GM18951 (cell line): ENCODE measurements at regions of chr4 and their contacts with region 1.

Region 1: GRCh38 chr4:24980064-24980690 is 50.6 kb downstream of the LGI2 start:
- POLR2A ChIP-seq: no peak

Region 2: GRCh38 chr4:24809376-24809775 is 170.8 kb before region 1 on chr4:
- in situ Hi-C with region 1: no loop called
- POLR2A ChIP-seq: no peak

Region 3: DNA sequence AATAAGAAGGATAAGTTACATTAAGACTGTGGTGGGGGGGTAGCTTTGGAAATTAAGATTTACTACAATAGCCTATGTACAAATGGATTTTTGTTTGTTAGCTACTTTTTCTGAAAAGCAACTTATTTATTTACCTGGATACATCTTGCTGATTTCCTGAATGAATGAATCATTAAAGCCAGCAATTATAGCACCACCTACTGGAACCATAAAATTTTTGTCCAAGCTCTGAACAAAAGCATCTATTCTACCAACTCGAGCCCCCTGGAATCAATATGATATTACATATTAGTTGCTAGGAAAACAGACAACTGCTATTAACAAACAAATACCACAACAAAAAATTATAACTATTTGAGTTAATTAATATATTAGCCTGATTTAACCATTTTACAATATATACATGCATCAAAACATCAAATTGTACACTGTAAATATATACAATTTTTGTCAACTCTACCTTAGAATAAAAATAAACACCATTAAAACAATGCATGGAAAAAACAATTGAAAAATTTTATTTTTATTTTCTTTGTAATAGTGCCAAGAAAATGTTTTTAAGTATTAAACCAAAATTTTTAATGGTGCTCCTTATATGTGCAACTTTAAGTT is 164.8 kb after region 1 on chr4:
- in situ Hi-C with region 1: loop called (anchors 10 kb)
- POLR2A ChIP-seq: no peak